Vagina (tissue), 2 donors: ENCODE measurements at regions of chr22 and their contacts with region 1.

Region 1: GRCh38 chr22:27885977-27886842 is 32.8 kb downstream of the PITPNB start:
- DNase-seq: no peak
- H3K4me3 ChIP-seq: no peak overlapping the region
- H3K27ac ChIP-seq: peak overlapping the region; percentile 42
- H3K4me1 ChIP-seq: peaks cover 35% of the 10 kb centered on the region
- H3K27me3 ChIP-seq: no peaks in the 10 kb centered on the region
- CTCF ChIP-seq: peak; percentile 68 to 83 (median 74)
- POLR2A ChIP-seq: no peak

Region 2: DNA sequence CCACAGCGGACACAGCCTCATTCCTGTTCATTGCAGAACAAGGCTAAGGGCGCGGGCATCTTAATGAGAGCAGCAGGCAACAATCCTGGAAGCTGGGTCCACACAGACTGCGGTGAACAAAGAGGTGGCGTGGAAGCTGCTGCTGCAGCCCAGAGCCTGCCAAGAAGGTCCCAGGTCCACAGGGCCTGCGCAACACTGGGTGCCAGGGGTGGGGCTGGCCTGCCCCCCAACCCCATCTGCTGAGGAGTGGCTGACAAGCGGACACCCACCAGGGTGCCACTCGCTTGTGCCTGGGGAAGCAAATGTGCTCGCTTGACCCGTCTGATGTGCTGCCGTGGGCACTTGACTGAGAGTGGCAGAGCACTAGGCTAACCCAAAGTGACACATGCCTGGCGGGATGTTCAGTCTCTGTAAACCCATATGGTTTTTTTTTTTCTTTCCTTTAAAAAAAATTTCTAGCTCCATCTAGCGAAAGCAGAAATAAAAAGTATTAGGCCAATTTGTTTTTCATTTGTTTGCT is 116.0 kb after region 1 on chr22:
- intact Hi-C with region 1: loop called (anchors 5 kb)
- DNase-seq: no peak
- H3K4me3 ChIP-seq: no peak overlapping the region
- H3K27ac ChIP-seq: no peak overlapping the region
- H3K4me1 ChIP-seq: peaks cover 5% of the 10 kb centered on the region
- H3K27me3 ChIP-seq: no peaks in the 10 kb centered on the region
- CTCF ChIP-seq: no peak
- POLR2A ChIP-seq: no peak